ENCODE measurements at regions of chr15 and their contacts with region 1.

Region 1: DNA sequence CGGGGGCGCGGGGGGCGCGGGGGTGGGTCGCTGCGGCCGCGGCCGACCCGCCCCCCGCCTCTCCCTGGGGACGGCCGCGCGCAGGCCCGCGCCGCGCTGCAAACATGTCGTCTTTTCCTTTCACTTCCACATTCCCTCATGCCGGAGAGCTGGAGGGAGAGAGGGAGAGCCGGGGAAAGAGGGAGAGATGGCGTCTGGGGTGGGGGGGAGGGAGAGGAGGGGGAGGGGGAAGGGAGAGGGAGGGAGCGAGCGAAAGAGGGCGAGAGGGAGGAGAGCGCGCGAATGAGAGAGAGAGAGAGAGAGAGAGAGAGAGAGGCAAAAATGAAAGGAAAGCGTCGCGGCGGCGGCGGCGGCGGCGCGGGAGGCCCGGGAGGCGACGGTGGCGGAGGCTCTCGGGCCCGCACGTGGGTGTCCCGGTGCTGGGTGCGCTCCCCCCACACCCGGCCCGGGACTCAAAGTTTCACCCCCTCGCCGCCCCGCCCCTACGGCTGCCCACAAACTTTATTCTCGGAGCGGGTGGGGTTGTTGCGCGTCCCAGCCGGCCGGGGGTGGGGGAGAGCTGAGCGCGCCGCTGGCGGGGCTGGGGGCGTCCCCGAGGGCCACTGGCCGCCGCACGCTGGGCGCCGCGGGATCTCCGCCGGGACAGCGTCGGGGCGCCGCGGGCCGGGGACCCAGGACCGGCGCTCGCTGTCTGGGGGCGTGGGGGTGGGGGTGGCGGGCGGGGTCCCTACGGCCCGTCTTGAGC is 731 bp downstream of the ZNF710 start:
- DNase-seq: peak; percentile 59
- ATAC-seq: peak; percentile 60
- H3K4me3 Mint-ChIP-seq: peak overlapping the region; percentile 91
- H3K27ac Mint-ChIP-seq: peak overlapping the region; percentile 91
- H3K4me1 Mint-ChIP-seq: peaks cover 41% of the 10 kb centered on the region
- H3K27me3 Mint-ChIP-seq: no peaks in the 10 kb centered on the region
- CTCF ChIP-seq: no peak

Region 2: DNA sequence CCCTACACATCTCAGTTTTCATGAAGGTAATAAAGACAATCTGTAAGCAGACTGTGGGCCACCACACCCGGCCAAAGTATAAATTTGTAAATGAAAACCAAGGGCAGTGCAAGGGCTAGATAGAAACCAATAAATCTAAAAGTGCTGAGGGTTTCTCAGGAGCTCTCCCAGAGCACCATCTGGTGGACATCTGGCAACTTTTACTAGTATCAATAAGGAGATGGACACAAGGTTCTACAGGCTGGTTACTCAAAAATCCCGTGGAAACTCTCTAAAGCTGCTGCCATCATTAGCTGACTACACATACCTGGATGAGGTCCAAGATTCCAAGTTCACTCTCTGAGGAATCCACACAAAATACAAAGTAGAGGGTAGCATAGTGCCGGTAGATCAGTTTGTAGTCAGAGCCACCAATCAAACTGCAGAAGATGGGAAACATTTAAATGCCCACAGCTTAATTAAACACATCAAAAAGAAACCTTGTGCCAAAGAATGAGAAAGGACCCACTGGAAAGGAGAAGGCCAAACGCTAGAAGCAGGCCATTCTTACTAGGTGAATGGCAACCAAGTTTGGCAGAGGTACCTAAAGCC is 113.5 kb before region 1 on chr15:
- CTCF ChIA-PET with region 1: no interaction called
- POLR2A ChIA-PET with region 1: interaction called, 15 read pairs
- intact Hi-C with region 1: no loop called
- DNase-seq: no peak
- ATAC-seq: no peak
- H3K4me3 Mint-ChIP-seq: no peak overlapping the region
- H3K27ac Mint-ChIP-seq: no peak overlapping the region
- H3K4me1 Mint-ChIP-seq: peaks cover 30% of the 10 kb centered on the region
- H3K27me3 Mint-ChIP-seq: no peaks in the 10 kb centered on the region
- CTCF ChIP-seq: no peak

Region 3: DNA sequence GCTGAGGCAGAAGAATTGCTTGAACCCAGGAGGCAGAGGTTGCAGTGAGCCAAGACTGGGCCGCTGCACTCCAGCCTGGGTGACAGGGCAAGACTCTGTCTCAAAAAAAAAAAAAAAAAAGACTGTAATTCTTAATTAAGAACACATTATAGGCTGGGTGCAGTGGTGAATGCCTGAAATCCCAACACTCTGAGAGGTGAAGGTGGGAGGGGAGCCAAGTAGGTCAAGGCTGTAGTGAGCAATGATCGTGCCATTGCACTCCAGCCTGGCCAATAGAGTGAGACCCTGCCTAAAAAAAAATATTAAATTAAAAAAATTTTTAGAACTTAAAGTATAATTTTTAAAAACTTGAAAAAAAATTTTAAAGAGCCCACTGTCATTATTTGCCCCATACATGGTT is 75.7 kb before region 1 on chr15:
- CTCF ChIA-PET with region 1: no interaction called
- POLR2A ChIA-PET with region 1: no interaction called
- intact Hi-C with region 1: no loop called
- DNase-seq: no peak
- ATAC-seq: no peak
- H3K4me3 Mint-ChIP-seq: no peak overlapping the region
- H3K27ac Mint-ChIP-seq: no peak overlapping the region
- H3K4me1 Mint-ChIP-seq: no peaks in the 10 kb centered on the region
- H3K27me3 Mint-ChIP-seq: no peaks in the 10 kb centered on the region
- CTCF ChIP-seq: no peak

Region 4: GRCh38 chr15:90013503-90013937 is 11.7 kb after region 1 on chr15:
- CTCF ChIA-PET with region 1: no interaction called
- POLR2A ChIA-PET with region 1: interaction called, 12 read pairs
- intact Hi-C with region 1: no loop called
- DNase-seq: no peak
- ATAC-seq: peak; percentile 45
- H3K4me3 Mint-ChIP-seq: peak overlapping the region; percentile 48
- H3K27ac Mint-ChIP-seq: peak overlapping the region; percentile 20
- H3K4me1 Mint-ChIP-seq: peaks cover 38% of the 10 kb centered on the region
- H3K27me3 Mint-ChIP-seq: no peaks in the 10 kb centered on the region
- CTCF ChIP-seq: no peak

Region 5: GRCh38 chr15:90031231-90031791 is 29.5 kb after region 1 on chr15:
- CTCF ChIA-PET with region 1: interaction called, 5 read pairs
- POLR2A ChIA-PET with region 1: interaction called, 14 read pairs
- intact Hi-C with region 1: loop called (anchors 1 kb)
- DNase-seq: no peak
- ATAC-seq: peak; percentile 91
- H3K4me3 Mint-ChIP-seq: peak overlapping the region; percentile 67
- H3K27ac Mint-ChIP-seq: peak overlapping the region; percentile 76
- H3K4me1 Mint-ChIP-seq: peaks cover 58% of the 10 kb centered on the region
- H3K27me3 Mint-ChIP-seq: no peaks in the 10 kb centered on the region
- CTCF ChIP-seq: no peak

Region 6: DNA sequence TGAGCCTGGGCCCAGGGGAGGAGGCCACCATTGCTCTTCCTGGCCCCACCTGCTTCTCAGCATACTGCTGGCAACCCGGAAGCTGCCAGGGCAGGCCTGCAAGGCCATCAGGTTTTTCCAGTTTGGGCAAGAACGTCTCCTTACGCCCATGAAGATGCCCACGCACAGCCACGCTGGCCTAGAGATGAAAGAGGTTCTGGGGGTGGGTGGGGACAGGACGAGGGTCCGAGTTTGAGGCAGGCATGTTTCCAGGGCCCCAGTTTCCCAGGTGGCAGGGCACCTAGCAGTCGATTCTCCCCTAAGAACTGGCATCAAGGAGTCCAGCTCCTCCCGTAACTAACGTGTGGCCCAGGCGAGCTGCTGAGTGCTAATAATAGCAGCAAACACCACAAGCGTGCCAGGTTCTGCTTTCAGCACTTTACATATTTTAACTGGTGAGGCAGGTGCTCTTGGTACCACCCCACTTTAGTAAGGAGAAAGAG is 45.1 kb after region 1 on chr15:
- CTCF ChIA-PET with region 1: no interaction called
- POLR2A ChIA-PET with region 1: interaction called, 13 read pairs
- intact Hi-C with region 1: no loop called
- DNase-seq: peak; percentile 38
- ATAC-seq: peak; percentile 87
- H3K4me3 Mint-ChIP-seq: peak overlapping the region; percentile 55
- H3K27ac Mint-ChIP-seq: peak overlapping the region; percentile 92
- H3K4me1 Mint-ChIP-seq: peaks cover 62% of the 10 kb centered on the region
- H3K27me3 Mint-ChIP-seq: no peaks in the 10 kb centered on the region
- CTCF ChIP-seq: no peak

Region 7: DNA sequence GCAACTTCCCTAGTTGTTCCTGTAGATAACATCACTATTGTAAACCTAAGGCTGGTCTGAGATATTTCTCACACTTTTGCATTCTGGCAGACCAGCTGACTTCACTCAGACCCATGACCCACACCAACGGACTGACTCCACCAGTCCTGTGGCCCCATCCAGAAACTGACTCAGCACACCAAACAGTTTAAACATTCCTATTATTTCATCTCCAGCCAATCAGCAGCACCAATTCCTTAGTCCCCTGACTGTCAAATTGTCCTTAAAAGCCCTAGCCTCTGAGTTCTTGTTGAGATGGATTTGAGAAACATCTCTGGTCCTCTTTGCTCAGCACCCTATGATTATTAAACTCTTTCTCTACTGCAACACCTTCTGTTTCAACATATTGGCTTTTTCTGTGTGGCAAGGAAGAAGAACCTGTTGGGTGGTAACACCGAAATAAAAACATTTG is 112.6 kb after region 1 on chr15:
- CTCF ChIA-PET with region 1: no interaction called
- POLR2A ChIA-PET with region 1: no interaction called
- intact Hi-C with region 1: no loop called
- DNase-seq: no peak
- ATAC-seq: no peak
- H3K4me3 Mint-ChIP-seq: no peak overlapping the region
- H3K27ac Mint-ChIP-seq: no peak overlapping the region
- H3K4me1 Mint-ChIP-seq: no peaks in the 10 kb centered on the region
- H3K27me3 Mint-ChIP-seq: no peaks in the 10 kb centered on the region
- CTCF ChIP-seq: no peak

Region 8: GRCh38 chr15:90165659-90166421 is 164.0 kb after region 1 on chr15:
- CTCF ChIA-PET with region 1: no interaction called
- POLR2A ChIA-PET with region 1: no interaction called
- intact Hi-C with region 1: no loop called
- DNase-seq: no peak
- ATAC-seq: peak; percentile 75
- H3K4me3 Mint-ChIP-seq: peak overlapping the region; percentile 44
- H3K27ac Mint-ChIP-seq: peak overlapping the region; percentile 56
- H3K4me1 Mint-ChIP-seq: peaks cover 49% of the 10 kb centered on the region
- H3K27me3 Mint-ChIP-seq: no peaks in the 10 kb centered on the region
- CTCF ChIP-seq: no peak